Activated CD4-positive, alpha-beta T cell treated with anti-CD3 and anti-CD28 coated beads for 36 hours (primary cell): ENCODE measurements at regions of chr16 and their contacts with region 1.

Region 1: GRCh38 chr16:54936979-54937670 is 6.5 kb downstream of the IRX5 start:
- DNase-seq: peak; percentile 63
- ATAC-seq: peak; percentile 57
- H3K4me3 Mint-ChIP-seq: peak overlapping the region; percentile 43
- H3K27ac Mint-ChIP-seq: no peak overlapping the region
- H3K4me1 Mint-ChIP-seq: peaks cover 16% of the 10 kb centered on the region
- H3K27me3 Mint-ChIP-seq: peaks cover 81% of the 10 kb centered on the region

Region 2: GRCh38 chr16:55333684-55334083 is 396.6 kb after region 1 on chr16:
- CTCF ChIA-PET with region 1: no interaction called
- POLR2A ChIA-PET with region 1: no interaction called
- intact Hi-C with region 1: loop called in 1 of 2 experiments (anchors 5 kb)
- DNase-seq: no peak
- ATAC-seq: no peak
- H3K4me3 Mint-ChIP-seq: no peak overlapping the region
- H3K27ac Mint-ChIP-seq: no peak overlapping the region
- H3K4me1 Mint-ChIP-seq: no peaks in the 10 kb centered on the region
- H3K27me3 Mint-ChIP-seq: peaks cover 45% of the 10 kb centered on the region